ENCODE measurements at regions of chr1 and their contacts with region 1.

Region 1: DNA sequence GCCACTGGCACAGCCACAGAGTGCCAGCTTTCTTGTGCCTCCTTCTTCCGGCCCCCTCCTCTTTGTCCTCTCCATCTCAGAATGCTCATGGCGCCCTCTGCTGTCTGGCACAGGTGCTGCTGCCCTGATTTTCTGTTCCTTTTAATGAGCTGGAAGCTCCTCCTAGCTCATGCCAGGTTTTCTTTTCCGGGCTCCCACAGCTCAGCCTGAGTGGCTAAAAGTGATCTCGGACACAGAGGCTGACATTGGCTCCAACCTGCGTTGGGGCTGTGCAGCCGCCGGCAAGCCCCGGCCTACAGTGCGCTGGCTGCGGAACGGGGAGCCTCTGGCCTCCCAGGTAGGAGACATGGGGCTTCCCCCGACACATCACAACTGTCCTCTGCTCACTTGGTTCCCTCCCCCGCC is 18.7 kb downstream of the CNTN2 start:
- DNase-seq: no peak
- ATAC-seq: peak; percentile 49

Region 2: DNA sequence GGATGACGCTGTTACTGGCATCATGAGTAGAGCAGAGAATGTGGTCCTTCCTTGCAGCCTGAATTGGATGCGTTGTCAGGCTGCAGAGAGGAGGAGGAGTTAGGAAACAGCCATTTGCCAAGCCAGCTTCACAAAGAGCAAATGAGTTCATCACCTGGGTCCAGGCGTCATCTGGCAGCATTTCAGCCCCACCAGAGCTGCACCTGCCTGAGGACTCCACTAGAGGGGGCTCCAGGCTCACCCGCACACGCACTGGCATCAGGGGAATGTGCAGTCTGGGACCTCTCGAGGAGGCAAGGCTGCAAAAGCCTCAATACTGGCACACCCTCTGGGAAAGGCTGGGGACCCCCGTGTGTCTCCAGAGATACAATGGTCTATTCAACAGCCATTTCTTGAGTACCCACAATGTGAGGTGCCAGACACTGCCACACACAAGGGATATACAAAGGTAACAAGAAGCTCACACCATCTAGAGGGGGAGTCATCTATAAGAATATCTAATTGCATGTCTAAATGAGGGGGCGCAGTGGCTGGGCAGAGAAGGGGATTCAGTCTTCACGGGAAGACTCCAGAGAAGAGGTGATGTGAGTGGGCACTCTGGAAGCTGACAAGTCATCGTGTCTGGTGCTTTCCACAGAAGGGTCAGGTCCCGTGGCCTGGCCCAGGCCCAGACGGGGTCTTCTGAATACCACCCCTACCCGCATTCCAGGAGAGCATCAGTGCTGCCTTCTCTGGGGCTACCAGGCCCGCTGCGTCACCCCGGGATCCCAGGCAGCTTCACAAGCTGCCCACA is 72.2 kb before region 1 on chr1:
- intact Hi-C with region 1: loop called (anchors 1 kb)
- DNase-seq: peak; percentile 88
- ATAC-seq: peak; percentile 75

Region 3: GRCh38 chr1:205162301-205162700 is 100.6 kb after region 1 on chr1:
- intact Hi-C with region 1: no loop called
- DNase-seq: no peak
- ATAC-seq: no peak

Region 4: GRCh38 chr1:205249651-205250050 is 188.0 kb after region 1 on chr1:
- intact Hi-C with region 1: loop called (anchors 5 kb)
- DNase-seq: no peak
- ATAC-seq: no peak

Region 5: DNA sequence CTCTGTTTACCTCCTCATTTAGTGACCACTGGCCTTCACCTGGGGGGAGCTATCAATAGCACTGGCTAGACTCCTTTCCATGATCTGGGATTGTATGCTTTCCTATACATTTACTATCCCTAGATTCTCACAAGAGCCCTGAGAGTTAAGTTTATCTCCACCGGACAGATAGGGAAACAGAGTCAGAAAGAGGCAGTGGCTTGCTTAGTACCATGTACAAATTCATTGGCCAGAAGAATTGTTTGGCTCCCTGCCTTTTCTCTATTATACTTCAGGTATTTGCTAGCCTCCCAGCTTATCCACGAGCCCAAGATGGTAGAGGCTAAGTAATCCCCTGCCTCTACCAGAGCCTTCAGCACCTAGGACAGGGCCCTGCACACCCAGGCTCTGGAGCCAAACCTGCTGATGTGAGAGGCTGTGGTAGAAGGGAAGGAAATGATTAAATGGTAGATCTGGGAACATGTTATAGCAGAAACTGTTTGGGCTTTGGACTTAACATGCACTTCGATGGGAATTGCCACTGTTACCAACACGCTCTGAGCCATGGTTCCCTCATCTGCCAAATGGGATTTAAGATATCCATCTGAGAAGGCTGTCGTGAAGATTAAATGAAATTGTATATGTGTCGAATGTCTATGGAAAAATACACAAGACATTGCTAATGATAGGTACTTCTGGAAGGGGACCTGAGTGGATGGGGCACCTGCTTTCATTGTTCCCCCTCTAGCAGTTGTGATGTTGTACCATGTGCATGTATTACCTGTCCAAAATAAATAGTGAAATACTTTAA is 397.3 kb after region 1 on chr1:
- intact Hi-C with region 1: no loop called
- DNase-seq: no peak
- ATAC-seq: peak; percentile 56